BJ (cell line): ENCODE measurements at regions of chr11 and their contacts with region 1.

Region 1: DNA sequence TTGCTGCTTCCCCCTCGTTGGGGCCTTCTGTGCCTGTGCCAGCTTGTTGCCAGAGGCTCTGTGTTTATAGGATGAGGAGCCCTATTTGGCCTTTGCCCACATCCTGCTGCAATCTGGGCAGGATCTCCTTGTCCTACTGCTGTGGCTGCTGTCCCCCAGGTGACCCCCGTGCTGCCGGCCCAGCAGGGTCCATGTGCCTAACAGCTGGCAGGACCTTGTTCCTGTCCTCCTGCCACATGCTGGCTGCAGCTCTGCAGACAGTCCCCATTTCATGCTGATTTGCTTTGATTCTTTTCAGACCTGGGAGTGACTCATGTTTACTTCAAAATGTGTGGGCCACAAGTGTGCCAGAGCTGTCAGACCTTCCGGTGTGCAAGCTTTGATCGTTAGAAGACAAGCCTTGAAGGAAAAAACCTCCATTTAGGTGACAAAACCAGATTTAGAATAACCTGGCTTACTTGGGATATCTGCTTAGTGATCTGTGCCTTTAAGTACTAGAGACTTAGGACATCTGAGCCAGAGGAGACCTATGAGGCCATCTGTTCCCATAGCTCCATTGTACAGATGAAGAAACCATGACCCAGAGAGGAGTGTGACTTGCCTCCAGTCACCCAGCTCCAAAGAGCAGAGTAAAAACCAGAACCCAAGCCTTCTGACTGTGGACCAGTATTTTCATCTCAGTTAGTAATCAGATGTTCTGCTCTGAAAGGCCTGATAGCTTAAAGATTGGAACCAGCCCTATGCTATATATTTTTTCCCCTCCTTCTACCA is 11.1 kb downstream of the NAV2 start:
- DNase-seq: peak; percentile 31
- H3K4me3 ChIP-seq: no peak overlapping the region
- H3K27me3 ChIP-seq: no peaks in the 10 kb centered on the region
- CTCF ChIP-seq: no peak

Region 2: GRCh38 chr11:19735157-19735908 is 11.6 kb after region 1 on chr11:
- CTCF ChIA-PET with region 1: interaction called, 25 read pairs
- POLR2A ChIA-PET with region 1: no interaction called
- DNase-seq: peak; percentile 36
- H3K4me3 ChIP-seq: no peak overlapping the region
- H3K27me3 ChIP-seq: no peaks in the 10 kb centered on the region
- CTCF ChIP-seq: peak; percentile 66

Region 3: GRCh38 chr11:20474176-20474881 is 750.6 kb after region 1 on chr11:
- CTCF ChIA-PET with region 1: no interaction called
- POLR2A ChIA-PET with region 1: no interaction called
- DNase-seq: no peak
- H3K4me3 ChIP-seq: no peak overlapping the region
- H3K27me3 ChIP-seq: no peaks in the 10 kb centered on the region
- CTCF ChIP-seq: no peak